Activated CD8-positive, alpha-beta T cell treated with anti-CD3 and anti-CD28 coated beads for 36 hours (primary cell): ENCODE measurements at regions of chr9 and their contacts with region 1.

Region 1: GRCh38 chr9:109411798-109412352 is 86.2 kb downstream of the PTPN3 start:
- DNase-seq: peak; percentile 71
- ATAC-seq: peak; percentile 57
- H3K4me3 Mint-ChIP-seq: no peak overlapping the region
- H3K27ac Mint-ChIP-seq: peak overlapping the region; percentile 91
- H3K4me1 Mint-ChIP-seq: peaks cover 40% of the 10 kb centered on the region
- H3K27me3 Mint-ChIP-seq: peaks cover 15% of the 10 kb centered on the region
- CTCF ChIP-seq: peak; percentile 76

Region 2: GRCh38 chr9:109119439-109120203 is 292.3 kb before region 1 on chr9 and contains the start of gene TMEM245:
- CTCF ChIA-PET with region 1: no interaction called
- POLR2A ChIA-PET with region 1: no interaction called
- intact Hi-C with region 1: loop called (anchors 10 kb)
- DNase-seq: peak; percentile 98
- ATAC-seq: peak; percentile 91
- H3K4me3 Mint-ChIP-seq: peak within 1 kb of the TSS; percentile 91
- H3K27ac Mint-ChIP-seq: peak within 1 kb of the TSS; percentile 92
- H3K4me1 Mint-ChIP-seq: peaks cover 40% of the 10 kb centered on the region
- H3K27me3 Mint-ChIP-seq: no peaks in the 10 kb centered on the region
- CTCF ChIP-seq: no peak
- total RNA-seq, gene TMEM245: 23.3 to 26.7 TPM

Region 3: DNA sequence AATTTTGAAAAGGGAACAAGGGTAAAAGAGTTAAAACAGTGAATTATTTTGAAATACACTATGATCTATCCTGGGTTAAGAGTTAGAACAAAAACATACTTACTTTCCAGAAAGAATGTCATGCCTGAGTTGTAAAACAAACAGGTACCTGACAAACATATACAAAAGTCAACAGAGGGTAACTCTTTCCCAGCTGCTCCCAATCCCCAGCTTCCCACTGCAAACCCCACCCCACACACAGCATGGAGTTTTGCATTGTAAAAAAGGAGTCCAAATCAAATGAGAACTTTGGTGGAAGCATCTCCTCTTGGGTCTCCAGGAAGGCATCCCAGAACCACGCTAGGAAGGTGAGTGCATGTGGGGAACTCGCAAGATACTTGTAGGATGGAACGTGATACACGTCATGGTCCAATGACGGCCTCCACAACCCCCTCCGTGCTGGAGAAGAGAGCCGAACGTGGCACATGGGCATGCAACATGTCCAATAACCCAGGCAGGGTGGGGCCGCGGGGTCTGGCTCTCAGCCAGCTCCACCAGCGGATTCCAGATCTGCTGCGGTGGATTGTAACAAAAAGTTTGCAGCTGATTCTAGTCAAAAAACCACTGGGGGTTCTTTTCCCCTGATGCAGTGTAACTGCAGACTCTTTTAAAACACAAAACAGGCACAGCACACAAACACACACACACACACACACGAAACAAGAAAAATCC is 146.8 kb before region 1 on chr9:
- CTCF ChIA-PET with region 1: no interaction called
- POLR2A ChIA-PET with region 1: no interaction called
- intact Hi-C with region 1: no loop called
- DNase-seq: no peak
- ATAC-seq: no peak
- H3K4me3 Mint-ChIP-seq: no peak overlapping the region
- H3K27ac Mint-ChIP-seq: no peak overlapping the region
- H3K4me1 Mint-ChIP-seq: no peaks in the 10 kb centered on the region
- H3K27me3 Mint-ChIP-seq: peaks cover 5% of the 10 kb centered on the region
- CTCF ChIP-seq: no peak

Region 4: GRCh38 chr9:109401168-109401989 is 10.5 kb before region 1 on chr9:
- CTCF ChIA-PET with region 1: interaction called, 23 read pairs
- POLR2A ChIA-PET with region 1: no interaction called
- intact Hi-C with region 1: no loop called
- DNase-seq: peak; percentile 63
- ATAC-seq: peak; percentile 73
- H3K4me3 Mint-ChIP-seq: no peak overlapping the region
- H3K27ac Mint-ChIP-seq: no peak overlapping the region
- H3K4me1 Mint-ChIP-seq: peaks cover 9% of the 10 kb centered on the region
- H3K27me3 Mint-ChIP-seq: peaks cover 22% of the 10 kb centered on the region
- CTCF ChIP-seq: peak; percentile 70

Region 5: GRCh38 chr9:109422641-109423040 is 10.8 kb after region 1 on chr9:
- CTCF ChIA-PET with region 1: interaction called, 18 read pairs
- POLR2A ChIA-PET with region 1: no interaction called
- intact Hi-C with region 1: no loop called
- DNase-seq: no peak
- ATAC-seq: no peak
- H3K4me3 Mint-ChIP-seq: no peak overlapping the region
- H3K27ac Mint-ChIP-seq: no peak overlapping the region
- H3K4me1 Mint-ChIP-seq: peaks cover 6% of the 10 kb centered on the region
- H3K27me3 Mint-ChIP-seq: peaks cover 6% of the 10 kb centered on the region
- CTCF ChIP-seq: no peak